ENCODE measurements at regions of chr1 and their contacts with region 1.

Region 1: DNA sequence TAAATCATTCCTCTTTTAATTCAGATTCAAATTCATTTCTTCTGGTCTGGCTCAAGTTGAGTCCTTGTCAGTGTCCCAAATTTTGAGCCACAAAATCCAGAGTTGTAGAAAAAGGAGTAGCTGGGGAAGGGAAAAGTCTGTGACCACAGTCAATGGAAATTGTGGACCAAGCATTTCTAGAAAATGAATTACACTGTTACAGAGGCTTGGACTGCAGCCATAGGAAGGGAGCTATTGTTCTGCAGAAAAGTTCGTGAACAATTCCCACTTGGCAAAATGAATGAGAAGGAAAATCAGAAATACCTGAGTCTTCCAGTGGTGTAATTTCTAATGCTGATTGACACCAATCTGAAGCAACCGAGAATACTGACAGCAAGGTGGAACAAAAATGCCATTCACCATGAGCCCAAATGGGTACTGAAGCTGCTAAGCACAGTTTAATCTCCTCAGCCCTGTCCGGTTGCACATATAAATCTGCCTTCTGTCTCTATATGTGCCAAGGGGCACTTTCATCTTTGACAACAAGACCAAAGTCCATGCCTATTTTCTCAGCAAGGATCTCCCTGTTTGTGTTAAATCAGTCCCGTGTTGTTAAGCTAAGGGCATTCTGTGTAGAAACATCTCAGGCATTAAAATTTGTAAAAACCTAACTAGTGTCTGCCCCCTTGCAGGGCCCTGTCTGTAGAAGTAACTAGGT is 51.3 kb downstream of the TEX35 start:
- DNase-seq: no peak
- H3K4me3 ChIP-seq: no peak overlapping the region
- H3K27ac ChIP-seq: no peak overlapping the region
- H3K4me1 ChIP-seq: peaks cover 0 to 5% (median 0%) of the 10 kb centered on the region in 4 donors
- H3K27me3 ChIP-seq: no peaks in the 10 kb centered on the region
- CTCF ChIP-seq: no peak
- EP300 ChIP-seq: no peak
- POLR2A ChIP-seq: no peak

Region 2: GRCh38 chr1:178599745-178600144 is 35.5 kb after region 1 on chr1:
- intact Hi-C with region 1: loop called (anchors 5 kb)
- DNase-seq: no peak
- H3K4me3 ChIP-seq: no peak overlapping the region
- H3K27ac ChIP-seq: no peak overlapping the region
- H3K4me1 ChIP-seq: no peaks in the 10 kb centered on the region
- H3K27me3 ChIP-seq: no peaks in the 10 kb centered on the region
- CTCF ChIP-seq: no peak
- EP300 ChIP-seq: no peak
- POLR2A ChIP-seq: no peak

Measured in sigmoid colon (tissue), 7 donors.